ENCODE measurements at regions of chr5 and their contacts with region 1.

Region 1: DNA sequence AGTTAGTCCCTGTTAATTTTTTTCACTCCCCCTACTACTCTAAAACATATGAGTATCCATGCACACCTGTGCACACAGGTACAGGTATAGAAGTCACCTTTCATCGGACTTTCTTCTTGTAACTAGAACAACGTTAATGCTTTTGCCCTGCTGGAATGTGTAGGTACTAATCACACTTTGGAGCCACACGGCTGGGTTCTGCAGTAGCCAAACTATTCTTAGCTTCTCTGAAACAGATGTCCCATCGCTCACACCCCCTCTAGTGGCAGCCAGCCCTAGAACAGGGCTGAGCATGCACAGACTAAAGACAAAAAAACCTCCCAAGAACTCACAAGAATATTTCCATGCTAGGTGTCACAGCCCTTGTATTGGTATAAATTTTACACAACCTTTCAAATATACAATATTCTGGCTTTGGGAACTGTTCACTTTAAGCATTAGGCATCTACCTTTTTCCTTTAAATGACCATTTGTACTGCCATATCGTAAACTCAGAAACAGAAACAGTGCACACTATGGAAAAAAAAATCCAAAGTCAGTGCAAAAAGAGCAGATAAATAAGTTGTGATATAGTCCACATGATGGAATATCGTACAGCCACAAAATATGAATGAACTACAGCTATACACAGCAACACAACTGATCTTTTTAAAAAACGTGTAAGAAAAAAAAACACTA is 64.0 kb downstream of the RETREG1 start:
- DNase-seq: peak; percentile 70
- ATAC-seq: peak; percentile 91
- H3K4me3 Mint-ChIP-seq: no peak overlapping the region
- H3K27ac Mint-ChIP-seq: no peak overlapping the region
- H3K4me1 Mint-ChIP-seq: peaks cover 13% of the 10 kb centered on the region
- H3K27me3 Mint-ChIP-seq: no peaks in the 10 kb centered on the region

Region 2: GRCh38 chr5:16456103-16456832 is 96.5 kb before region 1 on chr5:
- CTCF ChIA-PET with region 1: interaction called, 19 read pairs
- POLR2A ChIA-PET with region 1: no interaction called
- DNase-seq: peak; percentile 54
- ATAC-seq: peak; percentile 77
- H3K4me3 Mint-ChIP-seq: no peak overlapping the region
- H3K27ac Mint-ChIP-seq: peak overlapping the region; percentile 51
- H3K4me1 Mint-ChIP-seq: peaks cover 37% of the 10 kb centered on the region
- H3K27me3 Mint-ChIP-seq: no peaks in the 10 kb centered on the region

Region 3: GRCh38 chr5:16489322-16489791 is 63.4 kb before region 1 on chr5:
- CTCF ChIA-PET with region 1: interaction called, 11 read pairs
- POLR2A ChIA-PET with region 1: no interaction called
- DNase-seq: no peak
- ATAC-seq: peak; percentile 60
- H3K4me3 Mint-ChIP-seq: no peak overlapping the region
- H3K27ac Mint-ChIP-seq: no peak overlapping the region
- H3K4me1 Mint-ChIP-seq: peaks cover 8% of the 10 kb centered on the region
- H3K27me3 Mint-ChIP-seq: no peaks in the 10 kb centered on the region

Region 4: DNA sequence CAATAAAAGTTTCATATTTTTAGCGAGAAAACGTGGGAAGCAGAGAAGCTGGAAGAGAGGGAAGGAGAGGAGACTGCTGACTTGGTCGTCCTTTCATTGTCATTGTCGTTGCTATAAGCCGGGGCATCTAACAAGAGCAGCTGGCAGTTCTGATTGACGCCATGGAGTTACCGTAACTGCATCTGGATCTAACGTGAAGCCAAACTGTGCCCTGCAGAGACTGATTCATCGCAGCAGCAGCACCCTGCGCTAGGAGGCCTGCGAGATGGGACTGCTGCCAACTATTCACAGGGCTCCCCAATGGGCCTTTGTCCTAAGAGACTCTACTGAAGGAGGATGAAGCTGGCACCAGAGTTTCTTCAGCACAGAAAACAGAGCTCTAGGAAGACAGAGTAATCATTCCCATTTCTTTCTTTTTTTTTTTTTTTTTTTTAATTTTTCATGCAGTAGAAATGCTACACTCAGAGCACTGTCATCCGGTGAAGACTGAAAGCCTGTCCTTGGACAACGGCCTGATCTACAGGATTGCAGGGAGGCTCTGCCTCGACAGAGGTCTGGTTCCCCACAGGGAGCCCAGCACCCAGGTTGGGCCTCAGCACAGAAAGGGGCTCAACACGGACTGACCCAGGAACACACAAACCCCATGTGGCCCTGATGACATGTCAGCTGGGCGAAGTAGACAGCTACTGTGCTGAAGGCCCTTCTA is 16.2 kb after region 1 on chr5:
- CTCF ChIA-PET with region 1: interaction called, 24 read pairs
- POLR2A ChIA-PET with region 1: no interaction called
- DNase-seq: no peak
- ATAC-seq: no peak
- H3K4me3 Mint-ChIP-seq: no peak overlapping the region
- H3K27ac Mint-ChIP-seq: no peak overlapping the region
- H3K4me1 Mint-ChIP-seq: peaks cover 24% of the 10 kb centered on the region
- H3K27me3 Mint-ChIP-seq: no peaks in the 10 kb centered on the region

Measured in activated CD8-positive, alpha-beta T cell treated with anti-CD3 and anti-CD28 coated beads, Interleukin-2, amount 10 ng/mL, durations not matched to agents 7 days and 5 days (primary cell).